CD8-positive, alpha-beta T cell (primary cell): ENCODE measurements at regions of chr13 and their contacts with region 1.

Region 1: DNA sequence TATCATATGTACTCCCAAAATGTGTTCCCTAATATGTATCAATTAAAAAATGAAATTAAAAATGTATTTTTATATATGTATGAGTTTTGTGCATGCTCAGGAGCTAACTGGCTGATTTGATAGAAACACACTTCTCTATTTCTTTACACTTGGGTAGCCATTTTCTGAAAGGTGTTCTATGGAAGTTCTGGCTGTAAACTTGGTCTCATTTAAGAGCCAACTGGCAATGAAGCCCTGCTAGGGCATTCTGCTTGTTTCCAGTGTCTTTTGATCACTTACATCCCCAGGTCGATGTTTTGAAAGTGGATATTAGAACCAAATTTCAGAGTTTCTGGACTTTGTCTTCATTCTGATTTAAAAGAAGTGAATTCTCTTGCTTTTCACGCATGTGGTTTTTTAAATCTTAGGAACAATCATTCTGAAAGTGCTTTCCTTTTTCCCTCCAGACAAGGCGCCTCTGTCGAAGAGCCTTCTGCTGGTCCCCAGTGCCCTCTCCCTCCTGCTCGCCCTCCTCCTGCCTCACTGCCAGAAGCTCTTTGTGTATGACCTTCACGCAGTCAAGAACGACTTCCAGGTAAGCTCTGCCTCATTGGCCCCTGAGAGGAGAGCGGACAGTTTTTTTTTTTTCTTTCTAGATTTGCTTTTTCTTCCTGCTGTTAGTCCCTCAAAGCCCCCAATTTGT is 20.1 kb downstream of the GPR18 start:
- DNase-seq: peak in 2 of 9 experiments; percentile 55 to 73
- ATAC-seq: peak; percentile 82
- H3K4me3 ChIP-seq: peak overlapping the region; percentile 47 to 49
- H3K4me3 Mint-ChIP-seq: peak overlapping the region; percentile 92
- H3K27ac ChIP-seq: peak overlapping the region; percentile 52 to 82
- H3K27ac Mint-ChIP-seq: peak overlapping the region; percentile 100
- H3K4me1 ChIP-seq: peaks cover 52% of the 10 kb centered on the region
- H3K4me1 Mint-ChIP-seq: peaks cover 73% of the 10 kb centered on the region
- H3K27me3 ChIP-seq: no peaks in the 10 kb centered on the region
- H3K27me3 Mint-ChIP-seq: no peaks in the 10 kb centered on the region
- CTCF ChIP-seq: no peak

Region 2: GRCh38 chr13:99214232-99214631 is 23.9 kb before region 1 on chr13:
- CTCF ChIA-PET with region 1: no interaction called
- POLR2A ChIA-PET with region 1: interaction called, 4 read pairs
- intact Hi-C with region 1: loop called in 1 of 2 experiments (anchors 2 kb)
- DNase-seq: peak in 5 of 9 experiments; percentile 33 to 72 (median 60)
- ATAC-seq: peak; percentile 37
- H3K4me3 ChIP-seq: peak overlapping the region; percentile 9 to 65
- H3K4me3 Mint-ChIP-seq: peak overlapping the region; percentile 88
- H3K27ac ChIP-seq: peak overlapping the region; percentile 3 to 78
- H3K27ac Mint-ChIP-seq: peak overlapping the region; percentile 99
- H3K4me1 ChIP-seq: peaks cover 76% of the 10 kb centered on the region
- H3K4me1 Mint-ChIP-seq: peaks cover 81% of the 10 kb centered on the region
- H3K27me3 ChIP-seq: no peaks in the 10 kb centered on the region
- H3K27me3 Mint-ChIP-seq: no peaks in the 10 kb centered on the region
- CTCF ChIP-seq: no peak

Region 3: DNA sequence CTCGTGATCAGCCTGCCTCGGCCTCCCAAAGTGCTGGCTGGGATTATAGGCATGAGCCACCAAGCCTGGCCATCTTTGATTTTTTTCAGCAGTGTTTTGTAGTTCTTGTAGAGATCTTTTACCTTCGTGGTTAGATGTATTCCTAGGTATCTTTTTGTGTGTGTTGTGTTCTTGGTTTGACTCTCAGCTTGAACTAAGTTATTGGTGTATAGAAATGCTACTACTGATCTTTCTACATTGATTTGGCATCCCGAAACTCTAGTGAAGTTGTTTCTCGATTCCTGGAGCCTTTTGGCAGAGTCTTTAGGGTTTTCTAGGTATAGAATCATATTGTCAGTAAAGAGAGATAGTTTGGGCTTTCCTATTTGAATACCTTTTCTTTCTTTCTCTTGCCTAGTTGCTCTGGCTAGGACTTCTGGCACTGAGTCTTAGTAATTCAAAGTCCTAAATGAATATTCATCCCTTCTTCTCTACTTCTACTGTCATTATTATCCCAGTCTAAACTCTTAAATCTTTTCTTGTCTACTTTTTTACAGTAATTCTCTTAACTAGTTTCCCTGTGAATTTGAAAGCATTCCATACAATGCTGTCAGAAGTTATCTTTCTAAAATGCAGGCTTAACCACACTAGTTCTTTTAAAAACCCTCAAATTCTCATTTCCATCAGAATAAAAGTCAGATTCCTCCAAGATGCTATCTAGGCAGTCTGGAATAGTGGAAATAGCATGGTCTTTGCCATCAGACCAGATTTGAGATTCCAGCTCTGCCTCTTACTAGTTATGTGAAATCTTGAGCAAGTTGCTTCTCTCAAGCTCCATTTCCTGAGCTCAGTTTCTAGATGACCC is 13.1 kb after region 1 on chr13:
- CTCF ChIA-PET with region 1: interaction called, 3 read pairs
- POLR2A ChIA-PET with region 1: interaction called, 3 read pairs
- intact Hi-C with region 1: loop called in 1 of 2 experiments (anchors 1 kb)
- DNase-seq: no peak
- ATAC-seq: no peak
- H3K4me3 ChIP-seq: no peak overlapping the region
- H3K4me3 Mint-ChIP-seq: no peak overlapping the region
- H3K27ac ChIP-seq: peak overlapping the region in 1 of 2 experiments; percentile 0
- H3K27ac Mint-ChIP-seq: peak overlapping the region; percentile 79
- H3K4me1 ChIP-seq: peaks cover 51% of the 10 kb centered on the region
- H3K4me1 Mint-ChIP-seq: peaks cover 75% of the 10 kb centered on the region
- H3K27me3 ChIP-seq: no peaks in the 10 kb centered on the region
- H3K27me3 Mint-ChIP-seq: no peaks in the 10 kb centered on the region
- CTCF ChIP-seq: no peak